ENCODE measurements at regions of chr10 and their contacts with region 1.

Region 1: DNA sequence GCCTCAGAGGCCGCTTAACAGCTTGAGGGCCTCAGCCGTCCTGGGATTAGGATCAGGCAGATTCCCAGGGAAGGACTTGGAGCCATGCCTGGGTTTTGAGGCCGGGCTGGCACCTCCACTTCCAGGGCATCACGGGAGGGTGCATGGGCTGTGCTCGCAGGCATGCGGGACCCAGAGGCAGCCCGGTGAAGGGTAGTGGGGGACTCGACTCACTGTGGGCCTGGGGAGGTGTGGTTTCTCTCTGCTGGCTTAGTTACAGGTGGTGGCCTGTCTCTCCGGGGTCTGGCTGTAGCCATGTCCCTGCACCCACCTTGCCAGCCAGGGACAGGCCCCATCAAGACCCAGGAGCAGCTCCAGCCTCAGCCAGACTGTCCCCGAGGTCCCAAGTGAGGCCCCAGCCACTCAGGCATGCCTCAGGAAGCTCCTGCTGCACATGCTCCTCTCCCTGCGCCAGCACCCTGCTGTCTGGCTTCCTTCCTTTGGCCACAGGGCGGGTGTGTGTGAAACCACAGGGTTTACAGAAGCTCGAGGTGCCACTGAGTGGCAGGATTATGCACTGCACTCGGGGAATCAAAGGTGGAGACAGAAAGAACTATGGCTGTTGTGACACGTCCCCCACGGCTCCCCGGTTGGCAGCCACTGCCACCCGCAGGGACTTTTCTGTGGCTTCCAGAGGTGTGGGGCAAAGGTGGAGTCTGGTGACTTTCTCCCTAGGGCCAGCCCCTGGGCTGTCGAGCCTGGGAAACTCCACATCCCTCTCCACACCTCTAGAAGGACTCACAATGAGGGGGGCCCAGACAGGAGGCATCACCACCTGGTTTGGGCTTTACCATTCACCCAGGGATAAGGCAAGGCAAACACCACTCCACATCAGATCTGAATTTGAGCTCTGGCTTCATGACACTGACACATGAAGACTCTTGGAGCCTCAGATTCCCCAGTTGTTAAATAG is 19.7 kb downstream of the GOLGA7B start:
- DNase-seq: peak; percentile 84
- ATAC-seq: peak; percentile 97
- H3K4me3 ChIP-seq: peak overlapping the region in 1 of 2 experiments; percentile 31; a peak in 2 of 4 replicates
- H3K27ac ChIP-seq: peak overlapping the region; percentile 34
- H3K4me1 ChIP-seq: peaks cover 9 to 16% of the 10 kb centered on the region in 2 experiments; a peak in 3 of 4 replicates
- H3K27me3 ChIP-seq: no peaks in the 10 kb centered on the region; the same call in 1 of the 2 replicates
- CTCF ChIP-seq: peak; percentile 83 to 97 (median 89)
- POLR2A ChIP-seq: no peak
- RAD21 ChIP-seq: peak; percentile 100

Region 2: GRCh38 chr10:97479939-97480338 is 389.4 kb before region 1 on chr10:
- CTCF ChIA-PET with region 1: no interaction called
- POLR2A ChIA-PET with region 1: no interaction called
- RAD21 ChIA-PET with region 1: no interaction called
- intact Hi-C with region 1: no loop called
- DNase-seq: no peak
- ATAC-seq: peak; percentile 49; the same call in 1 of the 2 replicates
- H3K4me3 ChIP-seq: no peak overlapping the region
- H3K27ac ChIP-seq: no peak overlapping the region
- H3K4me1 ChIP-seq: no peaks in the 10 kb centered on the region; a peak in 1 of 4 replicates
- H3K27me3 ChIP-seq: no peaks in the 10 kb centered on the region
- CTCF ChIP-seq: no peak
- POLR2A ChIP-seq: no peak
- RAD21 ChIP-seq: no peak

Region 3: DNA sequence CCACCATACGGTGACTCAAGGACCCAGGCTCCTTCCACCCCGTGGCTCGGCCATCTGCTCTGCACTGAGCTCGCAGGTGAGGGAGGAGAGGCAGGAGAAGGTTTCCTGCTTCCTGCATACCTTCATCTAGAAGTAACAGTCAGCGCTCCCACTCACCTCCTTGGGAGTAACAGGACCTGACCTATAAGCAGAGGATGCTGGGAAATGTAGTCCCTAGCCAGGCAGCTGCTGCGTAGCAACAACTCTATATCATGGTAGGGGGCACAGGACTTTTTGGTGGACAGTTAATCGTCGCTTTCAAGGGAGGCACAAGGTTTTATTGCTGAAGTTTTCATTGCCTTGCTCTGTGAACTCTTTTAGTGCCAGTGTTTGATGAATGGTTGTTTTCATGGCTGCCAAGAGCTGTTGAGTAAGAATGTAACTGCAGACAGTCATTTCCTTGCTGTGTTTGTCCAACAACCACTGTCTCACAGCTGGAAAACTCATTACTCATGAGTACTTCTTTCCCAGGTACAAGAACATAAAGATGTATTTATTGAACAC is 142.7 kb before region 1 on chr10:
- CTCF ChIA-PET with region 1: no interaction called
- POLR2A ChIA-PET with region 1: no interaction called
- RAD21 ChIA-PET with region 1: no interaction called
- intact Hi-C with region 1: no loop called
- DNase-seq: no peak
- ATAC-seq: peak; percentile 63
- H3K4me3 ChIP-seq: no peak overlapping the region
- H3K27ac ChIP-seq: no peak overlapping the region
- H3K4me1 ChIP-seq: peaks cover 0 to 11% of the 10 kb centered on the region in 2 experiments; a peak in 2 of 4 replicates
- H3K27me3 ChIP-seq: no peaks in the 10 kb centered on the region
- CTCF ChIP-seq: no peak
- POLR2A ChIP-seq: no peak
- RAD21 ChIP-seq: no peak

Region 4: GRCh38 chr10:97759158-97759887 is 110.0 kb before region 1 on chr10:
- CTCF ChIA-PET with region 1: interaction called, 7 read pairs
- POLR2A ChIA-PET with region 1: no interaction called
- RAD21 ChIA-PET with region 1: no interaction called
- intact Hi-C with region 1: loop called (anchors 1 kb)
- DNase-seq: peak; percentile 48
- ATAC-seq: peak; percentile 94
- H3K4me3 ChIP-seq: no peak overlapping the region
- H3K27ac ChIP-seq: no peak overlapping the region
- H3K4me1 ChIP-seq: peaks cover 2% of the 10 kb centered on the region in 2 experiments; a peak in 3 of 4 replicates
- H3K27me3 ChIP-seq: no peaks in the 10 kb centered on the region
- CTCF ChIP-seq: peak; percentile 79 to 98 (median 94)
- POLR2A ChIP-seq: no peak
- RAD21 ChIP-seq: peak; percentile 86

Region 5: GRCh38 chr10:97792141-97792721 is 77.1 kb before region 1 on chr10:
- CTCF ChIA-PET with region 1: interaction called, 51 read pairs
- POLR2A ChIA-PET with region 1: interaction called, 3 read pairs
- RAD21 ChIA-PET with region 1: interaction called, 4 to 5 read pairs
- intact Hi-C with region 1: loop called (anchors 1 kb)
- DNase-seq: peak; percentile 38
- ATAC-seq: no peak; the same call in 1 of the 2 replicates
- H3K4me3 ChIP-seq: no peak overlapping the region
- H3K27ac ChIP-seq: no peak overlapping the region
- H3K4me1 ChIP-seq: no peaks in the 10 kb centered on the region
- H3K27me3 ChIP-seq: no peaks in the 10 kb centered on the region
- CTCF ChIP-seq: peak; percentile 94 to 96 (median 94)
- POLR2A ChIP-seq: no peak
- RAD21 ChIP-seq: peak; percentile 98

Region 6: GRCh38 chr10:97843281-97843671 is 26.1 kb before region 1 on chr10:
- CTCF ChIA-PET with region 1: no interaction called
- POLR2A ChIA-PET with region 1: no interaction called
- RAD21 ChIA-PET with region 1: no interaction called
- intact Hi-C with region 1: no loop called
- DNase-seq: no peak
- ATAC-seq: no peak; the same call in 1 of the 2 replicates
- H3K4me3 ChIP-seq: no peak overlapping the region
- H3K27ac ChIP-seq: no peak overlapping the region
- H3K4me1 ChIP-seq: peaks cover 13 to 29% of the 10 kb centered on the region in 2 experiments
- H3K27me3 ChIP-seq: no peaks in the 10 kb centered on the region
- CTCF ChIP-seq: no peak
- POLR2A ChIP-seq: no peak
- RAD21 ChIP-seq: no peak

Region 7: GRCh38 chr10:98028168-98028770 is 158.9 kb after region 1 on chr10:
- CTCF ChIA-PET with region 1: no interaction called
- POLR2A ChIA-PET with region 1: no interaction called
- RAD21 ChIA-PET with region 1: no interaction called
- intact Hi-C with region 1: no loop called
- DNase-seq: peak; percentile 37
- ATAC-seq: peak; percentile 95
- H3K4me3 ChIP-seq: no peak overlapping the region
- H3K27ac ChIP-seq: no peak overlapping the region
- H3K4me1 ChIP-seq: no peaks in the 10 kb centered on the region
- H3K27me3 ChIP-seq: peaks cover 33% of the 10 kb centered on the region
- CTCF ChIP-seq: peak; percentile 78 to 98 (median 96)
- POLR2A ChIP-seq: no peak
- RAD21 ChIP-seq: peak; percentile 73